ENCODE measurements at regions of chr6 and their contacts with region 1.

Region 1: GRCh38 chr6:28335564-28336283 is at the start of gene ZSCAN31:
- DNase-seq: peak; percentile 86
- ATAC-seq: peak; percentile 96
- H3K4me3 Mint-ChIP-seq: no peak within 1 kb of the TSS
- H3K27ac Mint-ChIP-seq: no peak within 1 kb of the TSS
- H3K4me1 Mint-ChIP-seq: peaks cover 7% of the 10 kb centered on the region
- H3K27me3 Mint-ChIP-seq: peaks cover 3% of the 10 kb centered on the region
- total RNA-seq, gene ZSCAN31: 1.3 to 1.8 TPM

Region 2: DNA sequence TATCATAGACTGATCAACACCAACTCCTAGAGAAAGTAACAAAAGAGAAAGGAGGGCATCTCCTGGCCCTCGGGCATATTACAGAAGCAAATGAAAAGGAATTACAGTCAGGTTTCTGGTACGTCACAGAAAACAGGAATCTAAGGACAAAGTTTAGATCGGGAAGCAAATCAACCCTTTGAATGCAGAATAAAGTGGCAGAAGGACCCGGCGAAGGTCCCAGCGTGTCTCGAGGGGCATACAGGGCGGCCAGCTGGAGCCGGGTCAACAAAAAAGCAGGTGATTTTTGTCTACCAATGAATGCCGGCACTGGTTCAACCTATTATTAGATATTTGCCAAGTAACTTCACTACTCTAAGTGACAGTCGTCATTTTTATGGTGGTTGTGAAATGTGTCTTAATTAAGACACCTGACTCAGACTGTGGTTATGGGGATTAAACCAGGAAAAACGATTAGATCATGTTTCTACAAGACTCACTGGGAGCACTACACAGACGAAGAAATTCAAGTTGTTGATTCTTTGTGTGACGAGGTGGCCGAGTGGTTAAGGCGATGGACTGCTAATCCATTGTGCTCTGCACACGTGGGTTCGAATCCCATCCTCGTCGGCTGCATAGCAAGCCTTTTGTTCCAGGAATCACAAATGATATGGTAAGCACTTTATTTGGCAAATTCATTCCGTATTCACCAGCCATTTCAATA is 123.1 kb before region 1 on chr6:
- CTCF ChIA-PET with region 1: no interaction called
- POLR2A ChIA-PET with region 1: no interaction called
- intact Hi-C with region 1: loop called in 1 of 2 experiments (anchors 5 kb)
- DNase-seq: peak; percentile 80
- ATAC-seq: peak; percentile 71
- H3K4me3 Mint-ChIP-seq: peak overlapping the region; percentile 64
- H3K27ac Mint-ChIP-seq: peak overlapping the region; percentile 33
- H3K4me1 Mint-ChIP-seq: peaks cover 22% of the 10 kb centered on the region
- H3K27me3 Mint-ChIP-seq: peaks cover 71% of the 10 kb centered on the region

Region 3: DNA sequence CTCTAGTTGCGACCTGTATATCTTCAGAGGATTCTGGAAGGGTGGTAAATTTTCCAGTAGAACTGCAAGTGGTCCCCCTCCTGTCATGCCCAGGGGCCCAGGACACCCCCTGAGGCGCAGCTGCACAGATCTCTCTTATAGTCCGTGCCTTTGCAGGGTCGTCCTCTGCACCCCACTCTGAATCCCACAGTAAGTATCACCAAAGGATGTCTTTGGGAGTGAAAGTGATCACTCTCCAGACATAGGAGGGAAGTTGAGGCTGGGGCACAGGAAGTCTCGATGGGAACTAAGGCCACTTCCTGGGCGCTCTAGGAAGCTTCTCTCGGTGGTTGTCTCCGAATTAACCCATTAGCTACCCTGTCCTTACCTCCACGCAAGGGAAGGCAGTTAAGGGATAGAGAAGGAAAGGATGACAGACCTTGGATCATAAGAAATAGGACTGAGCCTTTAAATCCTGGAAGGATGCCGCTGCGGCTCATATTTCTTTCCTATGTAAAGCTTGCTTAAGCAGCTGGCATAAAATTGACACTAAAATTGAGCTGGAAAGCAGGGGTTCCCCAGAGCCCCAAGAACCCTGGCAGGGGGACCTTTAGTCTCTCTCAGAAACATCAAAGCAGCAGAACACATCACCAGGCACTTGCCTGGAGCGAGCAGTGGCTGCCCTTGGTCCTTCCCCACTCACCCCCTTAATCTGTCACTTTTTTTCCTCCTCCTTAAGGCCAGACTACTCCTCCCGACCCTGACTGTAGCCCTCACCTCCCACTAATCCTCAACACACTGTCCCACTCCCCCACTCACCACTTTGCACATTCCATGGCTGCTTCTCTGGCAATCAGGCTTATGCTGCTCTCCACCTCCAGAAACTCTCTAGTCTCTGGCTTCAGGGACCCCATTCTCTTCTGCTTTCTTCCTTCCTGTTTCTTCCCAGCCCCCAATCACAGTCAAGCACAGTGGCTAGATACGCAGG is 83.4 kb before region 1 on chr6 and contains the start of gene ZKSCAN4:
- CTCF ChIA-PET with region 1: no interaction called
- POLR2A ChIA-PET with region 1: no interaction called
- intact Hi-C with region 1: loop called in 1 of 2 experiments (anchors 1 kb)
- DNase-seq: peak; percentile 85
- ATAC-seq: peak; percentile 83
- H3K4me3 Mint-ChIP-seq: peak within 1 kb of the TSS; percentile 99
- H3K27ac Mint-ChIP-seq: peak within 1 kb of the TSS; percentile 96
- H3K4me1 Mint-ChIP-seq: peaks cover 14% of the 10 kb centered on the region
- H3K27me3 Mint-ChIP-seq: peaks cover 1% of the 10 kb centered on the region
- total RNA-seq, gene ZKSCAN4: 3.2 to 4.1 TPM

Region 4: GRCh38 chr6:28266962-28267694 is 68.6 kb before region 1 on chr6 and contains the start of gene ZSCAN26:
- CTCF ChIA-PET with region 1: interaction called, 4 read pairs
- POLR2A ChIA-PET with region 1: no interaction called
- intact Hi-C with region 1: loop called in 1 of 2 experiments (anchors 1 kb)
- DNase-seq: peak; percentile 91
- ATAC-seq: peak; percentile 90
- H3K4me3 Mint-ChIP-seq: no peak within 1 kb of the TSS
- H3K27ac Mint-ChIP-seq: no peak within 1 kb of the TSS
- H3K4me1 Mint-ChIP-seq: peaks cover 32% of the 10 kb centered on the region
- H3K27me3 Mint-ChIP-seq: no peaks in the 10 kb centered on the region
- total RNA-seq, gene ZSCAN26: 5.0 to 6.7 TPM

Region 5: GRCh38 chr6:28349892-28350737 is 14.4 kb after region 1 on chr6 and contains the start of gene ZKSCAN3:
- CTCF ChIA-PET with region 1: interaction called, 13 read pairs
- POLR2A ChIA-PET with region 1: no interaction called
- intact Hi-C with region 1: loop called (anchors 1 kb)
- DNase-seq: peak; percentile 94
- ATAC-seq: peak; percentile 100
- H3K4me3 Mint-ChIP-seq: peak within 1 kb of the TSS; percentile 96
- H3K27ac Mint-ChIP-seq: peak within 1 kb of the TSS; percentile 93
- H3K4me1 Mint-ChIP-seq: peaks cover 22% of the 10 kb centered on the region
- H3K27me3 Mint-ChIP-seq: peaks cover 7% of the 10 kb centered on the region
- total RNA-seq, gene ZKSCAN3: 2.2 to 3.1 TPM

Region 6: GRCh38 chr6:28355743-28356665 is 20.3 kb after region 1 on chr6:
- CTCF ChIA-PET with region 1: interaction called, 13 read pairs
- POLR2A ChIA-PET with region 1: interaction called, 3 read pairs
- intact Hi-C with region 1: no loop called
- DNase-seq: peak; percentile 71
- ATAC-seq: peak; percentile 85
- H3K4me3 Mint-ChIP-seq: peak overlapping the region; percentile 75
- H3K27ac Mint-ChIP-seq: peak overlapping the region; percentile 81
- H3K4me1 Mint-ChIP-seq: peaks cover 15% of the 10 kb centered on the region
- H3K27me3 Mint-ChIP-seq: no peaks in the 10 kb centered on the region

Region 7: DNA sequence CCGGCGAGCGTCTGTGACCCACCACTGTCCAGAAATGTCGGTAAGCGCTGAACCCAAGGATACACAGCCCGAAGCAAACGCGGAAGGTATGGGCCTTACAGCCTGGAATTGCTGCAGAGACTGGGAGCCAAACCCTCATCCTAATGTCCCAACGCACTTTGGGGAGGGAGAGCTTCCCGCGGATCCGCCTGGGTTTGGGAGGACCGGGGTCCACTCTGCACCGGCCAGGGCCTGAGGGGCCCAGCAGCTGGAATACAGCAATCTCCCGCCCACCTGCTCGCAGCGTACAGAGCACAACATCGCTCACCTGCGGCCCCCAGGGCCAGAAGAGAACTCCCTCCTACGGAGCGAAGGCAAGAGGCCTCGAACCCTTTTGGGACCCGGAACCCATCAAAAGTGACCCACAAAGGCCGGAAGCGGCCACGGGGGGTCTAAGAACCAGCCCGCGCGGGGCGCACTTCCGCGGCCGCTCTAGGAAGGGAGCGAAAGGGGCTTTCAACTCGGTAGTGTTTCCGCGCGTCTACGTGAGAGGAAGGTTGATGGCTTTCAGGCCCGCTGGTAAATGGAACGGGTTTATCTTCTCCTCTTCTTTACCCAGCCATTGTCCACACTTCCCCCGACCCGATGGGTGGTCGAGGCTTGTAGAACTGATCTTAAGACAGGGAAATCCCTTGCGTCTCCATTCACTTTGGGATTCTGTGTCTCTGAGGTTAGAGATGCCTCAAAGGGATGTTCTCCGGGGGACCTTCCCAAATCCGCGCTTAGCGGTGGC is 63.8 kb after region 1 on chr6 and contains the start of gene ZSCAN12:
- CTCF ChIA-PET with region 1: no interaction called
- POLR2A ChIA-PET with region 1: no interaction called
- intact Hi-C with region 1: no loop called
- DNase-seq: peak; percentile 92
- ATAC-seq: peak; percentile 91
- H3K4me3 Mint-ChIP-seq: peak within 1 kb of the TSS; percentile 89
- H3K27ac Mint-ChIP-seq: peak within 1 kb of the TSS; percentile 92
- H3K4me1 Mint-ChIP-seq: peaks cover 42% of the 10 kb centered on the region
- H3K27me3 Mint-ChIP-seq: peaks cover 15% of the 10 kb centered on the region
- total RNA-seq, gene ZSCAN12: 6.9 to 7.6 TPM

Region 8: DNA sequence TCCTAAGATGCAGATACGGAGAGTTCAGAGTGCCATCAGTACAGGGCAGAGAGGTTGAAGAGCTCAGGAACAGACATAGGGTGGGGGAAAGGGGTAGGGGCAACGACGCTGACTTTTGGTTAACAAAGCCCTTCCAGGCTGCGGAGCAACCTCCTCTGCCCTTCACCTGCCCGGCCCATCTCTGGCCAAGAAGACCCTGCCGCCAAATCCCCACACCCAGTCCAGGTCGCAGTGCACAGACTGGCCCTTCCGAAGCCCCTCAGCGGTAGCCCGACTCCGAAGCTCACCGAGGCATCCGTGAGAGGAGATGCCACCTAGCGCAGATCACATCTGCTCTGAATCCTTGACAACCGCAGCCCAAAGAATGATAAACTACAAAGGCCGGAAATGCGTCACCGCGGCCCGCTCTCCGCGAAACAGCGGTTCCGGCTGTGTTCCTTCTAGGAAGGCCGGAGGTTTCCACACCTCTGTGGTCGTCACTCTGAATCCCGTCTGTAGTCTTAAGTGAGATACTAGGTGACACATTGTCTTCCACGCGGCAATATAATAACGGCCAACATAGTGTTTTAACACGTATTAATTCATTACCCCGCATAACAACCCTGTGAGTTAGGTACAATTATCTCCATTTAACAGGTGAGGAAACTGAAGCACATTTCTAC is 107.5 kb after region 1 on chr6 and contains the start of gene ZSCAN23:
- CTCF ChIA-PET with region 1: no interaction called
- POLR2A ChIA-PET with region 1: no interaction called
- intact Hi-C with region 1: loop called in 1 of 2 experiments (anchors 2 kb)
- DNase-seq: peak; percentile 91
- ATAC-seq: peak; percentile 92
- H3K4me3 Mint-ChIP-seq: peak within 1 kb of the TSS; percentile 96
- H3K27ac Mint-ChIP-seq: peak within 1 kb of the TSS; percentile 91
- H3K4me1 Mint-ChIP-seq: peaks cover 32% of the 10 kb centered on the region
- H3K27me3 Mint-ChIP-seq: peaks cover 16% of the 10 kb centered on the region
- total RNA-seq, gene ZSCAN23: 1.9 to 2.9 TPM